ENCODE measurements at regions of chr12 and their contacts with region 1.

Region 1: DNA sequence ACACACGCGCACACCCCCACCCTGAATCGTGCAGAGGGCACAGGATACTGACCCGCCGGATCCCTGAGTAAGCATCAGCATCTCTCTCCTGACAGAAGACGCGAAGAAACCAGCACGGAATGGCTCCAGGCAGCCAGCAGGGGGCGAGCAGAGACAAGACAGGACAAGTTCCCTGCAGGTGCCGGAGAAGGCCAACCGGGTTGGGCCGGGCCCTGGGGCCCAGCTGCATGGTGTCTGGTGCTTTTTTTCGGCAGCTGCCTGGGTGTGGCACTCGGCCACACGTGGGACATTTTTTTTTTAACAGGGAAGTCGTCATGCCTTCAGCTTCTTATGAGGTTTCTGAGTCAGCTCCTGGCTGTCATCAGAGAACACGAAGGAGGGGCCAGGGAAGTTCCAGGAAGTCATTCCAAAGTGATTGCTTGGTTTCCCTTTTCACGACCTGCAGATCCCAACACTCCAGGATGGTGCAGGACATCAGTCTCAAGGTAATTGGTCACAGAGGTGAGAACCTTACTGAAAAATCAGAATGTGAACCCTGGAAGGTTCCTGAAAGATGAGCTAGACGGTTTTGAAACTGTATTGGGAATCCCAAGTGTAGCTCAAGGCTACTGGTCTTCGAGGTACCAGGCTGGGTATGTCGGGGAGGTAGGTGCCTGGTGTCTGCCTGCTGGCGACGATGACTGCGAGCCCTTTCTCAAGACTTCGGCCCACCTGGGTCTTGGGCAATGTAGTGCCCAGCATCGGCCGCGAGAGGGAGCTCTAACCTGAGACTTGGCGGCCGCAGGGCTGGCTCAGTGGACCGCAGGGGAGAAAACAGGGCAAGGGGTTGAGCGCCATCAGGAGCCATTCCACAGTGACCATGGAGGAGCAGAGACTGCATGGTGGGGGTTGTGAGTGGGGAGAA is 190.8 kb upstream of the PRMT8 start:
- DNase-seq: peak; percentile 96
- H3K4me3 Mint-ChIP-seq: peak overlapping the region; percentile 71
- H3K27ac Mint-ChIP-seq: peak overlapping the region; percentile 98
- H3K4me1 Mint-ChIP-seq: peaks cover 34% of the 10 kb centered on the region
- H3K27me3 Mint-ChIP-seq: no peaks in the 10 kb centered on the region
- CTCF ChIP-seq: peak; percentile 98

Region 2: DNA sequence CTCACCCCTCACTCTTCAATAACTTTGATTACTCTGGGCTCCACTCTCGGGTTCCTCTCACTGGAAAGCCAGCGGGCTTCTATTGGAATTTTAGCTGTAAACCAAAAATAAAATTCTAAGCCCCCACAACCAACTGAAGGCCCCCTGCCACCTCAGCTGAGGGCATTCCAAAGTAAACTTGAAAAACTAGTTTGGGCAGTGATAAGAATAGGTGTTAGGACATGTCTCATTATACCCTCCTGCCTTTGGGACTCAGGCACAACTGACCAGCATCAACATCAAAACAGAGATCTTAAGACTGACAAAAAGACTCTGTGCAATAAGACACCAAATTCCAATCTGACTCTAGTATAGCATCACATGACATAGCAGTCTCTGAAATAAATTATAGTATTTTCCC is 234.9 kb before region 1 on chr12:
- CTCF ChIA-PET with region 1: no interaction called
- POLR2A ChIA-PET with region 1: no interaction called
- intact Hi-C with region 1: no loop called
- DNase-seq: no peak
- H3K4me3 Mint-ChIP-seq: no peak overlapping the region
- H3K27ac Mint-ChIP-seq: no peak overlapping the region
- H3K4me1 Mint-ChIP-seq: no peaks in the 10 kb centered on the region
- H3K27me3 Mint-ChIP-seq: peaks cover 67% of the 10 kb centered on the region
- CTCF ChIP-seq: no peak

Region 3: DNA sequence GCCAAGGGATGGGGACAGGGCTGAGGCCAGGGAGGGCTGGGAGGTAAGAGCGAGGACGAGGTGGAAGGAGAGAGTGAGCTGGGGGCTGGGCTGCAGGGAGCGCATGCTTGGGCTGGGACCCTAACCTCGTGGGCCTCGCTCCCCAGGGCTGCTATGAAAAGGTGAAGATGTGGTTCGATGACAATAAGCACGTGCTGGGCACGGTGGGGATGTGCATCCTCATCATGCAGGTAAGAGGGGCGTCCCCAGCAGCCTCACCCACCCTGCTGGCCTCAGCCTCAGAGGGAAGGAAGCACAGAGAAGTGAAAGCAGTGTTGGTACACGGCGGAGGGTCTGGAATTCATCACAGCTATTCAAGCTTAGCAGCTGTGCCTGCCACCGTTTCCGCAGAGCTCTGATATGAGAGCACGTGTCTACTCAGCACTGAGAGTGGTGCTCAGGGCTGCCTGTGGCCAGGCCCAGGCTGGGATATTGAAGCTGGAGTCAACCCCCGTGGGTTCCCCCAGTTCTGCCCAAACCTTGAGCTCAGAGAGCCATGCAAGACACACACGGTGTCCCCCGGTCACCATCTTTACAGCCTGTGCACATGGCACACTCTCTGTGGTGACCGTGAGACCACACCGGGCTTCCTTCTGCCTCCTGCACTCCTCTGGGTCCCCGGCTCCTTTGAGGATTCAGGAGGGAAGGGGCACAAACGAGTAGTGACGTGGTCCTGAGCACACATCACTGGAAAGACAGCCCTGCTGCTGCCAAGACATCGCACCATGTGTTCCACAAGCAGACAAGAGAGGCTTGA is 18.4 kb before region 1 on chr12:
- CTCF ChIA-PET with region 1: interaction called, 32 read pairs
- POLR2A ChIA-PET with region 1: no interaction called
- intact Hi-C with region 1: no loop called
- DNase-seq: no peak
- H3K4me3 Mint-ChIP-seq: no peak overlapping the region
- H3K27ac Mint-ChIP-seq: no peak overlapping the region
- H3K4me1 Mint-ChIP-seq: peaks cover 8% of the 10 kb centered on the region
- H3K27me3 Mint-ChIP-seq: no peaks in the 10 kb centered on the region
- CTCF ChIP-seq: no peak

Region 4: DNA sequence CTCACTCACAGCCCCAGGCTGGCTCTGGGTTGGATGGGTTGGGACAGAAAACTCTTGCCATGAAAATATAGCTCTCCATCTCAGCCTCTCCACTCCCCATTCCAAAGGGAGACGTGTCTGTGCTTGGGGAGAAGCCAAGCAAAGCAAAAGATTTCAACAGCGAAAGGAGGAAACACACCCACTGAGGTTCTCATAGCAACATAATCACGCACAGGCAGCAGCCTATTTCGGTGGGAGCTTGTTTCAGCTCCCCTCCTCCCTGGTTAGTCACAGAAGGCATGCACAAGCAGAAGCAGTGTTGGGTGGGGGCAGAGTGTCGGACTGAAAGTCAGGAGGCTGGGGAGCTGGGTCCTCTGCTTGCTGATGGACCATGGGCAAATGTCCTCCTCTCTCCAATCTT is 188.9 kb after region 1 on chr12:
- CTCF ChIA-PET with region 1: interaction called, 13 read pairs
- POLR2A ChIA-PET with region 1: no interaction called
- intact Hi-C with region 1: no loop called
- DNase-seq: peak; percentile 81
- H3K4me3 Mint-ChIP-seq: peak overlapping the region; percentile 21
- H3K27ac Mint-ChIP-seq: peak overlapping the region; percentile 5
- H3K4me1 Mint-ChIP-seq: peaks cover 24% of the 10 kb centered on the region
- H3K27me3 Mint-ChIP-seq: peaks cover 23% of the 10 kb centered on the region
- CTCF ChIP-seq: no peak

Region 5: DNA sequence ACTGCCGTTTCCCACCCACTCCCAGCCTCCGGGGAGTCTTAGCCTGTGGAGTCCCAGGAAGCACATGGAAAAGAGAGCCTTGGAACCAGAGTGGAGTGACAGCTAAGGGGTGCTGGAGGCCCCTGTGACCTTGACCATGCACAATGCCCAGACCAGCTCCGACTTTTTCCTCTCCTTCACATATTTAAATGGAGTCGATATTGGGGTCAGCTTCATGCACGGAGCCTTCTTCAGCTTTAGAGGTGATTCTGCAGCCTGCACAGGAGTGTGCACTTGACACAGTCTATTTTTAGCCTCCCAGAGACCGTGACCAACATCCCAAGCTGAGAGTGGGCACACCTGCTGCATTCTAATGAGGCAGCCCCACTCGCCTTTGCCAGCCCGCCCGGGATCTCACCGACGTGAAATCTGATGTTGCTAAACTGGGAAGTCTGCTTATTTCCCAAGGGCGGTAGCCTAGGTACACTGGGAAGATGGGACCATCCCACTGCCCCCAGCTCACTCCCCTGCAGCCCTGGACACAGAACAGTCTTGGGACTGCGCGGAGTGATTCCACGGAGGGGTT is 238.4 kb after region 1 on chr12:
- CTCF ChIA-PET with region 1: interaction called, 10 read pairs
- POLR2A ChIA-PET with region 1: interaction called, 3 read pairs
- intact Hi-C with region 1: no loop called
- DNase-seq: no peak
- H3K4me3 Mint-ChIP-seq: no peak overlapping the region
- H3K27ac Mint-ChIP-seq: no peak overlapping the region
- H3K4me1 Mint-ChIP-seq: no peaks in the 10 kb centered on the region
- H3K27me3 Mint-ChIP-seq: peaks cover 15% of the 10 kb centered on the region
- CTCF ChIP-seq: no peak

Region 6: GRCh38 chr12:3698218-3698974 is 398.2 kb after region 1 on chr12:
- CTCF ChIA-PET with region 1: interaction called, 11 read pairs
- POLR2A ChIA-PET with region 1: no interaction called
- intact Hi-C with region 1: no loop called
- DNase-seq: peak; percentile 58
- H3K4me3 Mint-ChIP-seq: no peak overlapping the region
- H3K27ac Mint-ChIP-seq: peak overlapping the region; percentile 23
- H3K4me1 Mint-ChIP-seq: peaks cover 15% of the 10 kb centered on the region
- H3K27me3 Mint-ChIP-seq: peaks cover 13% of the 10 kb centered on the region
- CTCF ChIP-seq: no peak

Region 7: GRCh38 chr12:3820122-3820521 is 519.9 kb after region 1 on chr12:
- CTCF ChIA-PET with region 1: interaction called, 11 read pairs
- POLR2A ChIA-PET with region 1: no interaction called
- intact Hi-C with region 1: no loop called
- DNase-seq: peak; percentile 20
- H3K4me3 Mint-ChIP-seq: no peak overlapping the region
- H3K27ac Mint-ChIP-seq: no peak overlapping the region
- H3K4me1 Mint-ChIP-seq: no peaks in the 10 kb centered on the region
- H3K27me3 Mint-ChIP-seq: no peaks in the 10 kb centered on the region
- CTCF ChIP-seq: no peak